Breast epithelium (tissue), 4 donors: ENCODE measurements at regions of chr2 and their contacts with region 1.

Region 1: GRCh38 chr2:128510696-128511397 is 192.2 kb upstream of the HS6ST1 start:
- DNase-seq: no peak
- H3K4me3 ChIP-seq: no peak overlapping the region
- H3K27ac ChIP-seq: no peak overlapping the region
- H3K4me1 ChIP-seq: no peaks in the 10 kb centered on the region
- H3K27me3 ChIP-seq: no peaks in the 10 kb centered on the region
- CTCF ChIP-seq: no peak
- POLR2A ChIP-seq: no peak

Region 2: GRCh38 chr2:128466376-128466775 is 44.5 kb before region 1 on chr2:
- intact Hi-C with region 1: loop called (anchors 2 kb)
- DNase-seq: peak in 1 of 2 donors; percentile 82
- H3K4me3 ChIP-seq: no peak overlapping the region
- H3K27ac ChIP-seq: no peak overlapping the region
- H3K4me1 ChIP-seq: no peaks in the 10 kb centered on the region
- H3K27me3 ChIP-seq: no peaks in the 10 kb centered on the region
- CTCF ChIP-seq: no peak
- POLR2A ChIP-seq: no peak

Region 3: GRCh38 chr2:128494640-128495321 is 16.1 kb before region 1 on chr2:
- intact Hi-C with region 1: no loop called
- DNase-seq: no peak
- H3K4me3 ChIP-seq: no peak overlapping the region
- H3K27ac ChIP-seq: no peak overlapping the region
- H3K4me1 ChIP-seq: peaks cover 0 to 4% of the 10 kb centered on the region in 2 donors
- H3K27me3 ChIP-seq: no peaks in the 10 kb centered on the region
- CTCF ChIP-seq: no peak
- POLR2A ChIP-seq: no peak

Region 4: GRCh38 chr2:129203331-129203730 is 692.5 kb after region 1 on chr2:
- intact Hi-C with region 1: no loop called
- DNase-seq: no peak
- H3K4me3 ChIP-seq: no peak overlapping the region
- H3K27ac ChIP-seq: no peak overlapping the region
- H3K4me1 ChIP-seq: no peaks in the 10 kb centered on the region
- H3K27me3 ChIP-seq: no peaks in the 10 kb centered on the region
- CTCF ChIP-seq: no peak
- POLR2A ChIP-seq: no peak